ENCODE measurements at regions of chr10 and their contacts with region 1.

Region 1: DNA sequence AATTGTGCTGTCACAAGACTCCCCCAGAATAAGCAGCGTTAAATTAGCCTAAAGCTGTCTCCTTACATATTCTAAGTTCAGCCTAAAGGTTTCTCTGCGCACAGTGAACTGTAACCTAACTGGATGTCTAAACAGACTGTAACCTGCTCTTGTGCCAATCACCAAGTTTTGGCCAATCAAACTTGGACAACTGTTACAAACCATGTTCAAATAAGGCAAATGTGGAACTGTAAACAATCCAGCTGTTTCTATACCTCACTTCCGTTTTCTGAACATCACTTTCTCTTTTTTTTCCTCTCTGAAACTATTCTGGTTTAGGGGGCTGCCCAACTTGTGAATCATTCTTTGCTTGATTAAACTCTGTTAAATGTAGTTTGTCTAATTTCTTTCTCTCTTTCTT is 252.2 kb upstream of the HABP2 start:
- DNase-seq: no peak
- H3K4me3 ChIP-seq: no peak overlapping the region
- H3K27ac ChIP-seq: no peak overlapping the region
- H3K4me1 ChIP-seq: no peaks in the 10 kb centered on the region
- H3K27me3 ChIP-seq: no peaks in the 10 kb centered on the region
- CTCF ChIP-seq: no peak

Region 2: DNA sequence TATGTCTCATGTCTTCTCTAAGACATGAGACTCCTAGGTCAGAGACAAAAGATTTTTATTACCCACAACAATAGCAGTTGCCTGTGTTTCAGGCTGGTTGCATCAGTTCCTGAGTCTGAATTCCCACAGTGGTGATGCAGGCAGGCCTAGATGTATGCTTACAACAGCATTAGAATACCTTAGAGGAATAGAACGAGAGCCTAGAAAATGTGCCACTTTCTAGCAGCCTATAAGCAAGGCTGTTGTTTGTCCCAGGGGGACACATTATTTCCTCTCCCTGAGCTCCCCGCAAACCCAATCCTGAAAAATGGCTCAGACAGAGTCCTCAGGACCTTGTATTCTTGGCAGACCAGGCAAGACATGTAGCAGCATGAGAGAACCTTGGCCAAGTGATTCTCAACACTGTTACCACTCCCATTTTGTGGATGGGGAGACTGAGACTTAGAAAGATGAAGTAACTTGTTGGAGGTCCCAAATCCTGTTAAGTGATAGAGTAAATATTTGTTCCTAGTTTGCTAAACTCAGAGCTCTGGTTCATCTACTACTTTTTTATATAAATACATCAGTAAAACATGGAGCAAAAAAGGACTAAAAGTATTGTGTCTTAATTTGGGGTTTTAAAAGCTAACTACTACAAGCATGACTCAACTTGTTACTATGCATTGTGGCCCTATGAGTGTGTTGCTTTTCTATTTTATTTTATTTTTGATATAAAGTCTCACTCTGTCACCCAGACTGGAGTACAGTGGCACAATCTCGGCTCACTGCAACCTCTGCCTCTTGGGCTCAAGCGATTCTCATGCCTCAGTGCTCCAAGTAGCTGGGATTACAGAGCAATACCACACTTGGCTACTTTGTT is 839.4 kb before region 1 on chr10:
- CTCF ChIA-PET with region 1: no interaction called
- dilution Hi-C with region 1: no loop called
- in situ Hi-C with region 1: no loop called
- intact Hi-C with region 1: no loop called
- DNase-seq: peak; percentile 87
- H3K4me3 ChIP-seq: no peak overlapping the region
- H3K27ac ChIP-seq: peak overlapping the region; percentile 73
- H3K4me1 ChIP-seq: peaks cover 7% of the 10 kb centered on the region
- H3K27me3 ChIP-seq: no peaks in the 10 kb centered on the region
- CTCF ChIP-seq: no peak

Region 3: DNA sequence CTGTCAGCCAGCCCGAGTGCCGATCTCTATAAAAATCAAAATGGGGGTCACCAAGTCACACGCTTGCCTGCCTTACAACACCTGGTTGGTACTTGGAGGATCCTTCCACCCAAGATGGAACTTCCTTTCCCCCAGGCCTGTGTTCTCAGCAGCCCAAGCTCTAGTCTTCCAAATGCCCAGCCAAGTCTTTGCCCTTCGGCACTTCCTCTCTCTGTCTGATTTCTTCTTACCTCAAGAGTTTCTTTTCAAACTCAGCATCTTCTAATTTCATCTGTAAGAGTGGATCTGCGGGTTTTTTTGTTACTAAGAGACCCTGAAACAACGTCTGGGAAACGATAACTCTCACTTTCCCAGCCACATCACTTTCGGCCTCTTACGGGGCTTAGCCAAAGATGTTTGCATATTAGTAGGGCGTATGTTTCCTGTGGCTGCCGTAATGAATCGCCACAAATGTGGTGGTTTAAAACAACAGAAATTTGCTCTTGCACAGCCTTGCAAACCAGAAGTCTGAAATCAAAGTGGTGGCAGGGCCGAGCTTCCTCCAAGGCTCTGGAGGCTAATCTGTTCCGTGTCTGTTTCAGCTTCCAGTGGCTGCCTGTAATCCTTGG is 130.7 kb before region 1 on chr10:
- CTCF ChIA-PET with region 1: no interaction called
- dilution Hi-C with region 1: no loop called
- in situ Hi-C with region 1: no loop called
- intact Hi-C with region 1: no loop called
- DNase-seq: no peak
- H3K4me3 ChIP-seq: no peak overlapping the region
- H3K27ac ChIP-seq: no peak overlapping the region
- H3K4me1 ChIP-seq: no peaks in the 10 kb centered on the region
- H3K27me3 ChIP-seq: no peaks in the 10 kb centered on the region
- CTCF ChIP-seq: no peak

Region 4: GRCh38 chr10:113356794-113357680 is 56.4 kb after region 1 on chr10:
- CTCF ChIA-PET with region 1: no interaction called
- dilution Hi-C with region 1: loop called (anchors 5 kb)
- in situ Hi-C with region 1: no loop called
- intact Hi-C with region 1: no loop called
- DNase-seq: no peak
- H3K4me3 ChIP-seq: no peak overlapping the region
- H3K27ac ChIP-seq: no peak overlapping the region
- H3K4me1 ChIP-seq: no peaks in the 10 kb centered on the region
- H3K27me3 ChIP-seq: peaks cover 8% of the 10 kb centered on the region
- CTCF ChIP-seq: no peak

Measured in mammary epithelial cell (primary cell).